PC-3 (cell line): ENCODE measurements at regions of chr11 and their contacts with region 1.

Region 1: DNA sequence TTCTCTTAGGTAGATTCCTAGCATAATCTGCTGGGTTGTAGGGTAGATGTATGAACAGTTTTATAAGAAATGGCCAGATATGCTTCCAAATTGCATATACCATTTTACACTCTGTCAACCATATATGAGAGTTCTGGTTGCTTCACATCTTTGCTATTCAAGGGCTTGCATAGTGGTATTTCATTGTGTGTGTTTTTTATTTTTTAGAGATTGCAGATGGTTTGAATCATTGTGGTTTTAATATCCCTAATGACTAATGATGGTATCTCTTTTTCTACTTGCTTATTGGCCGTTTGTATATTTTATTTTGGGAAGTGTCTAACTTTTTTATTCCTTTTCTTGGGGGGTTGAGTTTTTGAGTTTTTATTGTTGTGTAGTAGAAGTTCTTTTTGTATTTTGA is 26.9 kb downstream of the RNF214 start:
- DNase-seq: peak; percentile 58
- ATAC-seq: peak; percentile 43
- H3K4me3 ChIP-seq: no peak overlapping the region
- H3K27ac ChIP-seq: peak overlapping the region; percentile 8; the same call in 1 of the 2 replicates
- H3K4me1 ChIP-seq: peaks cover 36% of the 10 kb centered on the region
- H3K27me3 ChIP-seq: no peaks in the 10 kb centered on the region
- CTCF ChIP-seq: no peak

Region 2: DNA sequence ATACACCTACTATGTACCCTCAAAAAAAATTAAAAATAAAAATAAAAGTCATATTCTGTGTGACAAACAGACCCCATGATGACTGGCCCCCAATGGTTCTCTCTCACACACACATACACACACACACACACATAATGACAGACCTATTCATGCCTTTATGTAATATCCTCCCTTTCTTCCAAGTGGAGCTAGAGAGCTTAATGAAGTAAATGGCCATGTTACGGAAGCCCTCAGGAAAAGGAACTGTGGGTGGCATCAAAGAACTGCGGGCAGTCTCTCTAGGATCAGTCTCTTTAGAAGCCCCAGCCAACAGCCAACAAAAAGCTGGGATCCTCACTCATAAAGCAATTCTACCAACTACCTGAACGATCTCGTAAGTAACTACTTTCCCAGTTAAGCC is 286.7 kb before region 1 on chr11:
- CTCF ChIA-PET with region 1: no interaction called
- POLR2A ChIA-PET with region 1: no interaction called
- intact Hi-C with region 1: no loop called
- DNase-seq: no peak
- ATAC-seq: no peak
- H3K4me3 ChIP-seq: no peak overlapping the region
- H3K27ac ChIP-seq: no peak overlapping the region
- H3K4me1 ChIP-seq: peaks cover 19% of the 10 kb centered on the region
- H3K27me3 ChIP-seq: no peaks in the 10 kb centered on the region
- CTCF ChIP-seq: no peak; the same call in 1 of the 2 replicates

Region 3: GRCh38 chr11:117281159-117281558 is 21.7 kb after region 1 on chr11:
- CTCF ChIA-PET with region 1: no interaction called
- POLR2A ChIA-PET with region 1: interaction called, 3 read pairs
- intact Hi-C with region 1: loop called (anchors 1 kb)
- DNase-seq: peak; percentile 88
- ATAC-seq: peak; percentile 96
- H3K4me3 ChIP-seq: no peak overlapping the region
- H3K27ac ChIP-seq: peak overlapping the region; percentile 66
- H3K4me1 ChIP-seq: peaks cover 17% of the 10 kb centered on the region
- H3K27me3 ChIP-seq: no peaks in the 10 kb centered on the region
- CTCF ChIP-seq: no peak